ENCODE measurements at regions of chr6 and their contacts with region 1.

Region 1: DNA sequence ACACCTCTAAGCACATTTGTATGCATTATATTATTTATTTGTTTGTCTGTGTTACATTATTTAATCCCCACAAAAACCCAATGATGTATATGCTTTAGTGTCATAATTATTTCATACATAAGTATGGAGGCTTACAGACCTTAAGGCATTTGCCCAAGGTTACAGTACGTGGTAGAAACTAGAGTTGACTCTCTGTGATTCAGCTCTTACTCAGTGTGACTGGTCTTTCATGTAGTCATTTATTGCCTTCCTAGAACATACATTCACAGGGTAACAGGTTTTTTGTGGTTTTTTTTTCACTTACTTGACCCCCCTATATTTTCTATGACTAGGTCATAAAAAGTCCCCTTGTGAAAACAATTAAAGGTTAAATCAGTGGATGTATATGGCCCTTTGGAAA is 566.8 kb downstream of the TFAP2A start:
- DNase-seq: no peak
- H3K4me3 ChIP-seq: no peak overlapping the region
- H3K27ac ChIP-seq: no peak overlapping the region
- H3K4me1 ChIP-seq: peaks cover 3% of the 10 kb centered on the region
- H3K27me3 ChIP-seq: no peaks in the 10 kb centered on the region
- CTCF ChIP-seq: no peak

Region 2: DNA sequence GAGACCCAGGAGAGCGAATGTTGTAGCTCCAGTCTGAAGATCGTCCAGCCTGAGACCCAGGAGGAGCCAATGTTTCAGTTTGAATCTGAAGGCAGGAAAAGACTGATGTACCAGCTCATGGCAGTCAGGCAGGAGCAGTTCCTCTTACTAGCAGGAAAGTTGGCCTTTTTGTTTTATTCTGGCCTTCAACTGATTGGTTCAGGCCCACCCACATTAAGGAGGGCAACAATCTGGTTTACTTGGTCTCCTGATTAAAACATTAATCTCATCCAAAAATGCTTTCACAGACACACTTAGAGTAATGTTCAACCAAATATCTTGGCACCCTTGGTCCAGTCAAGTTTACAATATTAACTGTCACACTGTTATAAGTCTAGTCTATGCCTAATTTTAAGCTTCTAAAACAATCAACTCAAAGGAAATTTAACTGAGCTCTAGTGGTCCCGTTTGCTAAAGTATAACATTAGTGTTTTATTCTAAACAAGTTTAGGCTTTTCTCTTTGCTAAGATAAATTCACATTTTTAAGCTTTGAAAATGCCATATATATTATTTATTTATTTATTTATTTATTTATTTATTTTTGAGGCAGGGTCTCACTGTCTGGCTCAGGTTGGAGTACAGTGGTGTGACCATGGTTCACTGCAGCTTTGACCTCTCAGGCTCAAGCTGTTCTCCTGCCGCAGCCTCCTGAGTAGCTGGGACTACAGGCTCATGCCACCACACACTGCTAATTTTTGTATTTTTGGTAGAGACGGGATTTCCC is 1137.2 kb before region 1 on chr6:
- dilution Hi-C with region 1: loop called (anchors 10 kb)
- DNase-seq: no peak
- H3K4me3 ChIP-seq: no peak overlapping the region
- H3K27ac ChIP-seq: no peak overlapping the region
- H3K4me1 ChIP-seq: peaks cover 5% of the 10 kb centered on the region
- H3K27me3 ChIP-seq: no peaks in the 10 kb centered on the region
- CTCF ChIP-seq: no peak

Region 3: GRCh38 chr6:9711365-9711764 is 136.7 kb before region 1 on chr6:
- dilution Hi-C with region 1: no loop called
- DNase-seq: no peak
- H3K4me3 ChIP-seq: no peak overlapping the region
- H3K27ac ChIP-seq: no peak overlapping the region
- H3K4me1 ChIP-seq: no peaks in the 10 kb centered on the region
- H3K27me3 ChIP-seq: no peaks in the 10 kb centered on the region
- CTCF ChIP-seq: no peak

Region 4: DNA sequence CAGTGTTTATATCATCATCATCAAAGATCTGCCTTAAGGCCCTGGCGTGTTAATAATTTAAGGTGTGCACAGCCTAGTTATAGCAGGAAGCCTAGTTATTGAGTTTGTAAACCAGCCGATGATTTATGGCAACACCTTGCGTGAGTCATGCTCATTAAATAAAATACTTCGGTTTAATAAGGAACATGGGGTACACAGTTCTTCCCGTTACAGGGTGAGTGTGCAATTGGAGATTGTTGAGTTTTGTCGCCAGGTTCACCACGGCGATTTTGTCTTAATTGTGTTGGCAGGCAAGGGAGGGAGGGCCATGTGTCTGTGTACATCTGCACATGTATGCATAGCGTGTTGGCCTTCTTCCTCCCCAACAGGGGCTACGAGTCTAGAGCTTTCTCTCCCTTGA is 462.7 kb after region 1 on chr6:
- dilution Hi-C with region 1: no loop called
- DNase-seq: peak; percentile 60
- H3K4me3 ChIP-seq: peak overlapping the region in 2 of 3 experiments; percentile 3 to 48
- H3K27ac ChIP-seq: peak overlapping the region; percentile 73
- H3K4me1 ChIP-seq: peaks cover 43% of the 10 kb centered on the region
- H3K27me3 ChIP-seq: no peaks in the 10 kb centered on the region
- CTCF ChIP-seq: no peak

Measured in keratinocyte (primary cell).